Caco-2 (cell line): ENCODE measurements at regions of chr13 and their contacts with region 1.

Region 1: DNA sequence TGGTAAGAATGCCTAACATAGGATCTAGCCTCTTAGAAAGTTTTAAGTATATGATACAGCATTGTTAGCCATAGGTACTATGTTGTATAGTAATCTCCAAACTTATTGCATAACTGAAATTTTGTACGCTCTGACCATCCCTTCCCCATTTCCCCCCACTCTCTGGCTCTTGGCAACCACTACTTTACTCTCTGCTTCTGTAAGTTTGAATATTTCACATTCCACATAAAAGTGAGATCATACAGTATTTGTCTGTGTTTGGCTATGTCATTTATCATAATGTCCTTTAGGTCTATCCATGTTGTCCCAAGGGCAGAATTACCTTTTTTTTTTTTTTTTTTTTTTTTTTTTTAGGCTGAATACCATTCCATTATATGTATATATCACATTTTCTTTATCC is 396.9 kb downstream of the DLEU7 start:
- DNase-seq: no peak
- H3K4me3 ChIP-seq: no peak overlapping the region
- H3K4me3 Mint-ChIP-seq: no peak overlapping the region
- H3K27ac Mint-ChIP-seq: no peak overlapping the region
- H3K4me1 ChIP-seq: no peaks in the 10 kb centered on the region
- H3K4me1 Mint-ChIP-seq: no peaks in the 10 kb centered on the region
- H3K27me3 ChIP-seq: no peaks in the 10 kb centered on the region
- H3K27me3 Mint-ChIP-seq: no peaks in the 10 kb centered on the region
- CTCF ChIP-seq: no peak

Region 2: DNA sequence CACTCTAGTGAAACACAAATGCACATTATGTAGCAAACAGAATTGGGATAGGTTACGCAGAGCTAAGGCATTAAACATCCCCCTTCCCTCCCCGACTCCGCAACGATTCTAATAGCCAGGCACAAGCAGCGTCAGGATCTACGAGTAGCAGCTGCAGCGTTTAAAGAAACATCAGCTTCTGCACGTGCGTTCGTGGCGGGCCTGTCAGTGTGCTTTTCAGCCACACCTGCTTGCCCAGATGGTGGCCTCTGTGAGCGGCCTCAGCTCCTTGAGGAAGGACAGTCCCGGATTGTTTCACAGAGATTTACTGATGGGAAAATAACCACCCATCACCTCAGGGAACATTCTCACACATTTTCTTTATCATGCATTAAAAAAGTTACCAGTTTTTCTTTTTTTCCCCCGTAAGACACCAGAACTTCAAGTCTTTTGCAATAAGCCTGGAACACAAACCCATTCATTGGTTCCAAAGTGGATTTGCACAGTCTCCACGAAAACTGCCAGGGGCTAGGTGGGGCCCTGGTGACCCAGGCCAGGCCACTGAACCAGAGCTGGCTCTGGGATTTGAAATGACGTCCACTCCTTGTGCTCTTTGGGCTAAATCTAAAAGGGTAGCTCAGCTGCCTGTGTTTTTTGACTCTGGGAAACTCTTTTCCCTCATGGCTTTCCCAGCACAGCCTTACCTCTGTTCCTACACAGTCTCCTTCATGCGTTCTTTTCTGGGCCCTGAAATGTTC is 105.9 kb before region 1 on chr13:
- CTCF ChIA-PET with region 1: no interaction called
- POLR2A ChIA-PET with region 1: interaction called, 16 read pairs
- intact Hi-C with region 1: no loop called
- DNase-seq: no peak
- H3K4me3 ChIP-seq: no peak overlapping the region
- H3K4me3 Mint-ChIP-seq: no peak overlapping the region
- H3K27ac Mint-ChIP-seq: no peak overlapping the region
- H3K4me1 ChIP-seq: peaks cover 6% of the 10 kb centered on the region
- H3K4me1 Mint-ChIP-seq: peaks cover 31% of the 10 kb centered on the region
- H3K27me3 ChIP-seq: no peaks in the 10 kb centered on the region
- H3K27me3 Mint-ChIP-seq: no peaks in the 10 kb centered on the region
- CTCF ChIP-seq: no peak

Region 3: GRCh38 chr13:50370303-50370950 is 76.2 kb before region 1 on chr13:
- CTCF ChIA-PET with region 1: no interaction called
- POLR2A ChIA-PET with region 1: no interaction called
- intact Hi-C with region 1: no loop called
- DNase-seq: no peak
- H3K4me3 ChIP-seq: no peak overlapping the region
- H3K4me3 Mint-ChIP-seq: no peak overlapping the region
- H3K27ac Mint-ChIP-seq: no peak overlapping the region
- H3K4me1 ChIP-seq: no peaks in the 10 kb centered on the region
- H3K4me1 Mint-ChIP-seq: peaks cover 7% of the 10 kb centered on the region
- H3K27me3 ChIP-seq: no peaks in the 10 kb centered on the region
- H3K27me3 Mint-ChIP-seq: no peaks in the 10 kb centered on the region
- CTCF ChIP-seq: no peak